ENCODE measurements at regions of chr12 and their contacts with region 1.

Region 1: GRCh38 chr12:49644620-49644994 is 21.2 kb downstream of the PRPF40B start:
- DNase-seq: peak; percentile 92

Region 2: GRCh38 chr12:49599961-49600360 is 44.6 kb before region 1 on chr12:
- intact Hi-C with region 1: loop called in 1 of 2 experiments (anchors 2 kb)
- DNase-seq: no peak

Region 3: GRCh38 chr12:49707128-49707811 is 62.7 kb after region 1 on chr12 and contains the start of gene FMNL3:
- intact Hi-C with region 1: loop called (anchors 1 to 2 kb)
- DNase-seq: peak; percentile 100
- total RNA-seq, gene FMNL3: 16.6 to 27.9 TPM

Measured in posterior vena cava (tissue), 2 donors.